Activated CD4-positive, alpha-beta T cell treated with anti-CD3 and anti-CD28 coated beads for 36 hours (primary cell): ENCODE measurements at regions of chr17 and their contacts with region 1.

Region 1: GRCh38 chr17:16027708-16028584 is 28.3 kb downstream of the TTC19 start:
- DNase-seq: peak; percentile 80
- ATAC-seq: peak; percentile 98
- H3K4me3 Mint-ChIP-seq: peak overlapping the region; percentile 61
- H3K27ac Mint-ChIP-seq: peak overlapping the region; percentile 97
- H3K4me1 Mint-ChIP-seq: peaks cover 48% of the 10 kb centered on the region
- H3K27me3 Mint-ChIP-seq: no peaks in the 10 kb centered on the region

Region 2: DNA sequence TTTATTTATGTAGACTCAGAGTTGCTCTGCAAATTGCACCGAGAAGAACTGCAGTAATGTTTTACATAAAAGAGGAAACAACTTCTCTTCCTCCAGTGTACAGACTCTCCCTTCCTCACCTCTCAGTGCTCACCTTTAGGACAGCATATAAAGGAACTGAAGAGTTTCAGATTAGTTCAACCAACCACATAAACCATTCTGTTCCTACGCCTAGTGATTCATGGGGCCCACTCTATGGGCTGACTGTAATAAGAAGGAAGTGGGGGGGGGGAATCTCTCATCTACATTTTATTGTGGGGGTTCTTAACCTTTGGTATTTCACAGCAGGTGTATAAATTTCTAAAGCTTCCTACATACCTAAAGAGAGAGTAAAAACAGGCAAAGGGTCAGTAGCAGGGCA is 46.7 kb before region 1 on chr17:
- CTCF ChIA-PET with region 1: no interaction called
- POLR2A ChIA-PET with region 1: no interaction called
- intact Hi-C with region 1: loop called in 1 of 2 experiments (anchors 1 kb)
- DNase-seq: peak; percentile 58
- ATAC-seq: peak; percentile 100
- H3K4me3 Mint-ChIP-seq: no peak overlapping the region
- H3K27ac Mint-ChIP-seq: no peak overlapping the region
- H3K4me1 Mint-ChIP-seq: peaks cover 19% of the 10 kb centered on the region
- H3K27me3 Mint-ChIP-seq: no peaks in the 10 kb centered on the region

Region 3: DNA sequence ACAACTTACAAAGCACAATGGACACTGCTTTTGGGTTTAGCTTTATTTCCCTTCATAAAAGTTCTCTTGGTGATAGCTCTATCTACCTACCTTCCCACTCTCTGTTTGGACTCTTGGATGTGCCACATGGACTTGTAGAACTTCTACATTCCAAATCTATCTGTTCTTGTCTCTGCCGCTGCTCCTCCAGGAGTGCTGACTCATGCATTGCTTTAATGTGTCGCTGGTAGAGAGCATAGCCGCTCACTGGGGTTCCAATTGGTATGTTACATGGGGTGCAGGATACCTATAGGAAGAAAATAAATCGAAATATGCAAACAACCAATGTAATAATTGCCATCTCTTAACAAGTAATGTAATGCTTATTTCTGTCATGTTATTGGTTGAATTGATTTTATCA is 63.8 kb after region 1 on chr17:
- CTCF ChIA-PET with region 1: no interaction called
- POLR2A ChIA-PET with region 1: interaction called, 10 read pairs
- intact Hi-C with region 1: no loop called
- DNase-seq: no peak
- ATAC-seq: no peak
- H3K4me3 Mint-ChIP-seq: no peak overlapping the region
- H3K27ac Mint-ChIP-seq: no peak overlapping the region
- H3K4me1 Mint-ChIP-seq: peaks cover 7% of the 10 kb centered on the region
- H3K27me3 Mint-ChIP-seq: no peaks in the 10 kb centered on the region

Region 4: GRCh38 chr17:16232391-16232790 is 204.4 kb after region 1 on chr17:
- CTCF ChIA-PET with region 1: no interaction called
- POLR2A ChIA-PET with region 1: no interaction called
- intact Hi-C with region 1: loop called in 1 of 2 experiments (anchors 1 kb)
- DNase-seq: no peak
- ATAC-seq: no peak
- H3K4me3 Mint-ChIP-seq: no peak overlapping the region
- H3K27ac Mint-ChIP-seq: no peak overlapping the region
- H3K4me1 Mint-ChIP-seq: peaks cover 22% of the 10 kb centered on the region
- H3K27me3 Mint-ChIP-seq: no peaks in the 10 kb centered on the region

Region 5: DNA sequence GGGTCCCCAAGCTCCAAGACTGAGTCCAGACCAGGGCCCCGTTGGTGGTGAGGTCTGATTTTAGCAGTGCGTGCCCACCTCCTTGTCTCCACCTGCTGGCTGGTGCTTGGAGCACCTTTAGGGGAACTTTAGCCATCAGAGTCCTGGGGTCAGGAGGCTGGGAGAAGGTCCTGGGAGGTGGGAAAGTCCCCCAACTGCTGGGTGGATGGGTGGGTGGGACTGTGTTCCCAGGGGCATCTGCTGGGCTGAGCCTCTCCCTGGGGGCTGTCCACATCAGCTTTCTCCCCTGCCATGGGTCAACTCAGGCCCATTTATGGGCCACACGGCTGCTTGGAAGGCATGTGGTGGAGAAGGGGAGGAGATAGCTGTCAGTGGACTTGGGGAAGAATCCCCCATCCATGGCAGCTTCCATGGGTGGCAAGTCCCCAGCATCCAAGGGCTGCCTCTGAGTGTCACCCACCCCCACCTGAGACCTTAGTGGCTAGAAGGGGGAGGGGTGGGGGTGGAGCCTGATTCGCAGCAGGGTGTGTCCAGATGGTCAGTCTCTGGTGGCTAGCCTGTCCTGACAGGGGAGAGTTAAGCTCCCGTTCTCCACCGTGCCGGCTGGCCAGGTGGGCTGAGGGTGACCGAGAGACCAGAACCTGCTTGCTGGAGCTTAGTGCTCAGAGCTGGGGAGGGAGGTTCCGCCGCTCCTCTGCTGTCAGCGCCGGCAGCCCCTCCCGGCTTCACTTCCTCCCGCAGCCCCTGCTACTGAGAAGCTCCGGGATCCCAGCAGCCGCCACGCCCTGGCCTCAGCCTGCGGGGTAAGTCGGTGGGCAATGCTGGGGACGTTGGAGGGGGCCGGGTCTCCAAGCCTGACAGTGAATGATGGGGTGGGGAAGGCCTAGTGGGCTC is 387.3 kb after region 1 on chr17 and contains the start of gene TRPV2:
- CTCF ChIA-PET with region 1: no interaction called
- POLR2A ChIA-PET with region 1: no interaction called
- intact Hi-C with region 1: loop called in 1 of 2 experiments (anchors 1 kb)
- DNase-seq: peak; percentile 72
- ATAC-seq: peak; percentile 15
- H3K4me3 Mint-ChIP-seq: peak within 1 kb of the TSS; percentile 100
- H3K27ac Mint-ChIP-seq: peak within 1 kb of the TSS; percentile 99
- H3K4me1 Mint-ChIP-seq: peaks cover 46% of the 10 kb centered on the region
- H3K27me3 Mint-ChIP-seq: no peaks in the 10 kb centered on the region
- total RNA-seq, gene TRPV2: 24.3 to 35.6 TPM